Thyroid gland (tissue), 4 donors: ENCODE measurements at regions of chr17 and their contacts with region 1.

Region 1: GRCh38 chr17:74677558-74678466 is 34.9 kb downstream of the CD300LF start:
- DNase-seq: peak; percentile 38 to 50
- H3K4me3 ChIP-seq: no peak overlapping the region
- H3K27ac ChIP-seq: no peak overlapping the region
- H3K4me1 ChIP-seq: peaks cover 6 to 19% of the 10 kb centered on the region in 2 donors
- H3K27me3 ChIP-seq: no peaks in the 10 kb centered on the region
- CTCF ChIP-seq: no peak
- POLR2A ChIP-seq: no peak

Region 2: GRCh38 chr17:74592087-74592990 is 85.5 kb before region 1 on chr17 and contains the start of gene CD300LD:
- intact Hi-C with region 1: no loop called
- DNase-seq: no peak
- H3K4me3 ChIP-seq: no peak within 1 kb of the TSS
- H3K27ac ChIP-seq: no peak within 1 kb of the TSS
- H3K4me1 ChIP-seq: no peaks in the 10 kb centered on the region
- H3K27me3 ChIP-seq: no peaks in the 10 kb centered on the region
- CTCF ChIP-seq: no peak
- POLR2A ChIP-seq: no peak
- total RNA-seq, gene CD300LD: not detected

Region 3: DNA sequence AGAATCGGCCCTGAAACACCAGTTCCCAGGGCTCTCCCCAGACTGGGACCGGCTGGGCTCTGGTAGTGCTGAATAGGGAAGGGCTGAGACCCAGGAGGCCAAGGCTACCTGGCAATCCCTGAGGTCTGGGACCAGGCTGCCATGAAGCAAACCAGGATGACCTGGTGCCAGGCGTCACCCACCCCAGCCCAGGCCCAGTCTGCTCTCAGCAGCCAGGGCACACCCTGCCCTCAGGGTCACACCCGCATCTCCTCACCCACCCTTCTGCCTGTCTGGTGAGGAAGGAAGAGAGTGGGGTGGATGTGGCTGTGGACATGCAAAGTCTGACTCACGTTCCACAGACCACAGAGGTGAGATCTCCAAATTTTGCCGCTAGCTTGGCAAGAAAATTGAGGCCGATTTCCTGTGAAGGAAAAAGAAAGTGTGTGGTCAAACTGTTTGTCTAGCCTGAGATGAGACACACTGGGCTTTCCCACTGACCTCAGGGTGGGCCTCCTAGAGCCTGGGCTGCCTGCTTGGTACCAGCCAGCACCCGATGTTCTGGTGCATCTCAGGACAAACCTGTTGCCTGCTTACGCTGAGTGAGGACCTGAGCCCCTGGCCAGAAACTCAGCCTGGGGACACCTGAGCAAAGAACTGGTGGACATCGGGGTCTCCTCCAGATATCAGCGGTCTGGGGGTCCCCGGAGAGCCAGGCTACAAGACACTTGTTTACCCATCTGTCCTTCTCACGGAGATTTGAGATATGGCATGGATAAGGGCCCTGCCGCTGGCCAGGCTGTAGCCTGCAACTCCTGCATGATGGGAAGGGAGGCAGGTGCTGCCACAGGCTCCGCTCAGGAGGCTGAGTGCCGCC is 52.9 kb after region 1 on chr17:
- intact Hi-C with region 1: loop called (anchors 5 kb)
- DNase-seq: no peak
- H3K4me3 ChIP-seq: no peak overlapping the region
- H3K27ac ChIP-seq: no peak overlapping the region
- H3K4me1 ChIP-seq: peaks cover 7 to 9% of the 10 kb centered on the region in 2 donors
- H3K27me3 ChIP-seq: no peaks in the 10 kb centered on the region
- CTCF ChIP-seq: no peak
- POLR2A ChIP-seq: no peak